Activated CD4-positive, alpha-beta T cell treated with anti-CD3 and anti-CD28 coated beads for 36 hours (primary cell): ENCODE measurements at regions of chr2 and their contacts with region 1.

Region 1: GRCh38 chr2:192162392-192163042 is 32.2 kb downstream of the TMEFF2 start:
- DNase-seq: peak; percentile 80
- ATAC-seq: peak; percentile 74
- H3K4me3 Mint-ChIP-seq: no peak overlapping the region
- H3K27ac Mint-ChIP-seq: no peak overlapping the region
- H3K4me1 Mint-ChIP-seq: peaks cover 8% of the 10 kb centered on the region
- H3K27me3 Mint-ChIP-seq: peaks cover 9% of the 10 kb centered on the region

Region 2: GRCh38 chr2:191539068-191539467 is 623.4 kb before region 1 on chr2:
- CTCF ChIA-PET with region 1: interaction called, 18 read pairs
- POLR2A ChIA-PET with region 1: no interaction called
- intact Hi-C with region 1: no loop called
- DNase-seq: peak; percentile 64
- ATAC-seq: no peak
- H3K4me3 Mint-ChIP-seq: no peak overlapping the region
- H3K27ac Mint-ChIP-seq: no peak overlapping the region
- H3K4me1 Mint-ChIP-seq: no peaks in the 10 kb centered on the region
- H3K27me3 Mint-ChIP-seq: no peaks in the 10 kb centered on the region

Region 3: GRCh38 chr2:191566344-191566743 is 596.2 kb before region 1 on chr2:
- CTCF ChIA-PET with region 1: interaction called, 35 read pairs
- POLR2A ChIA-PET with region 1: no interaction called
- intact Hi-C with region 1: loop called in 1 of 2 experiments (anchors 1 kb)
- DNase-seq: peak; percentile 81
- ATAC-seq: peak; percentile 70
- H3K4me3 Mint-ChIP-seq: no peak overlapping the region
- H3K27ac Mint-ChIP-seq: no peak overlapping the region
- H3K4me1 Mint-ChIP-seq: peaks cover 16% of the 10 kb centered on the region
- H3K27me3 Mint-ChIP-seq: peaks cover 19% of the 10 kb centered on the region

Region 4: DNA sequence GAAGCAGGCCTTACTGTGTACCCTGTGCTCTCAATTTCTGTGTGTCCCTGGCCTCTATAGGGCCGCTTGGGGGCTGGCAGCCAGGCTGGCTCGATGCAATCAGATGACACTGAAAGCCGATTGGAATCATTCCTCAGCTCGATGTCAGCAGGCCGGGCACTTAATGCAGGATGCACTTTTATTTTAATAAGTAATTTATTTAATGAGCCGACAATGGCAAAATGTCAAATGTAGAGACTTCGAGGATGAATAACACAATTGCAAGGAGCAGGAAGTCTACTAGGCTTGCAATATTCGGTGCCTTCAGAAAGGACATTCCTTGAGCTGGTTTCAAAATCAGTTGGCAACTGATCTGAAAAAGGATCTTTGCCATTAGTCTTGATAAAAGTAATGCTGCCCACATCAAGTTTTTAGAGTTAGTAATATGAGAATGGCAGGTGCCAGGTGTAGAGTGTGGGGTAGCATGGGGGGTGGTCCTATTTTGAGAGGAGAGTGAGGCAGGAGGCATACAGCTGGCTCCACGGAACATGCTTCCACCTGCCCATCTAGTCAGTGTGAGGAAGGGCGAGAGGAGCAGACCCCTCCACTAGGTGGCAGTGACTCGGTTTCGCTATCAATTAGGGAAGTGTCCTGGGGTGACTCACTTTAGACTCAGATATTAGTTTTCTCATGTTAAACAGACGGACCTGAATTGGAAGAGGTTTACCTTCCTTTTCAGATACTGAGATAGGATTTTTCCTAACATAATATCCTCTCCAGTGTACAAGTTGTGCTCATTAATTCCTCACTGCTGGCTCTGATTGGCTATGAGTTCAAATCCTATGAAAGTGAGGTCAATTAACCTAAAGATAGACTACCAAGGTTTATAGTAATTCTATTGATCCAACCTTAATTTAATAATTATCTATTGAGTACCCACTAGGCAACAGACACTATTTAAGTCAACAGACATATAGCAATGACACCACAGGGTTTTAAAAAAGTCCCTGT is 403.7 kb before region 1 on chr2:
- CTCF ChIA-PET with region 1: interaction called, 11 read pairs
- POLR2A ChIA-PET with region 1: no interaction called
- intact Hi-C with region 1: loop called (anchors 1 to 5 kb)
- DNase-seq: peak; percentile 68
- ATAC-seq: peak; percentile 90
- H3K4me3 Mint-ChIP-seq: no peak overlapping the region
- H3K27ac Mint-ChIP-seq: no peak overlapping the region
- H3K4me1 Mint-ChIP-seq: peaks cover 5% of the 10 kb centered on the region
- H3K27me3 Mint-ChIP-seq: peaks cover 15% of the 10 kb centered on the region

Region 5: GRCh38 chr2:191811807-191812602 is 350.5 kb before region 1 on chr2:
- CTCF ChIA-PET with region 1: interaction called, 78 read pairs
- POLR2A ChIA-PET with region 1: no interaction called
- intact Hi-C with region 1: loop called (anchors 1 kb)
- DNase-seq: peak; percentile 65
- ATAC-seq: no peak
- H3K4me3 Mint-ChIP-seq: no peak overlapping the region
- H3K27ac Mint-ChIP-seq: no peak overlapping the region
- H3K4me1 Mint-ChIP-seq: no peaks in the 10 kb centered on the region
- H3K27me3 Mint-ChIP-seq: peaks cover 5% of the 10 kb centered on the region

Region 6: GRCh38 chr2:191878576-191879279 is 283.8 kb before region 1 on chr2:
- CTCF ChIA-PET with region 1: no interaction called
- POLR2A ChIA-PET with region 1: no interaction called
- intact Hi-C with region 1: no loop called
- DNase-seq: no peak
- ATAC-seq: no peak
- H3K4me3 Mint-ChIP-seq: no peak overlapping the region
- H3K27ac Mint-ChIP-seq: no peak overlapping the region
- H3K4me1 Mint-ChIP-seq: no peaks in the 10 kb centered on the region
- H3K27me3 Mint-ChIP-seq: peaks cover 2% of the 10 kb centered on the region

Region 7: GRCh38 chr2:192146069-192147015 is 16.2 kb before region 1 on chr2:
- CTCF ChIA-PET with region 1: interaction called, 10 read pairs
- POLR2A ChIA-PET with region 1: no interaction called
- intact Hi-C with region 1: no loop called
- DNase-seq: no peak
- ATAC-seq: peak; percentile 74
- H3K4me3 Mint-ChIP-seq: no peak overlapping the region
- H3K27ac Mint-ChIP-seq: no peak overlapping the region
- H3K4me1 Mint-ChIP-seq: peaks cover 2% of the 10 kb centered on the region
- H3K27me3 Mint-ChIP-seq: peaks cover 6% of the 10 kb centered on the region

Region 8: GRCh38 chr2:193690572-193690971 is 1528.1 kb after region 1 on chr2:
- CTCF ChIA-PET with region 1: no interaction called
- POLR2A ChIA-PET with region 1: no interaction called
- intact Hi-C with region 1: no loop called
- DNase-seq: no peak
- ATAC-seq: no peak
- H3K4me3 Mint-ChIP-seq: no peak overlapping the region
- H3K27ac Mint-ChIP-seq: no peak overlapping the region
- H3K4me1 Mint-ChIP-seq: no peaks in the 10 kb centered on the region
- H3K27me3 Mint-ChIP-seq: peaks cover 2% of the 10 kb centered on the region